ENCODE measurements at regions of chr16 and their contacts with region 1.

Region 1: GRCh38 chr16:81403616-81404373 is 40.8 kb upstream of the CMIP start:
- DNase-seq: peak; percentile 83
- H3K4me3 Mint-ChIP-seq: no peak overlapping the region
- H3K27ac Mint-ChIP-seq: no peak overlapping the region
- H3K4me1 Mint-ChIP-seq: peaks cover 4% of the 10 kb centered on the region
- H3K27me3 Mint-ChIP-seq: peaks cover 4% of the 10 kb centered on the region

Region 2: DNA sequence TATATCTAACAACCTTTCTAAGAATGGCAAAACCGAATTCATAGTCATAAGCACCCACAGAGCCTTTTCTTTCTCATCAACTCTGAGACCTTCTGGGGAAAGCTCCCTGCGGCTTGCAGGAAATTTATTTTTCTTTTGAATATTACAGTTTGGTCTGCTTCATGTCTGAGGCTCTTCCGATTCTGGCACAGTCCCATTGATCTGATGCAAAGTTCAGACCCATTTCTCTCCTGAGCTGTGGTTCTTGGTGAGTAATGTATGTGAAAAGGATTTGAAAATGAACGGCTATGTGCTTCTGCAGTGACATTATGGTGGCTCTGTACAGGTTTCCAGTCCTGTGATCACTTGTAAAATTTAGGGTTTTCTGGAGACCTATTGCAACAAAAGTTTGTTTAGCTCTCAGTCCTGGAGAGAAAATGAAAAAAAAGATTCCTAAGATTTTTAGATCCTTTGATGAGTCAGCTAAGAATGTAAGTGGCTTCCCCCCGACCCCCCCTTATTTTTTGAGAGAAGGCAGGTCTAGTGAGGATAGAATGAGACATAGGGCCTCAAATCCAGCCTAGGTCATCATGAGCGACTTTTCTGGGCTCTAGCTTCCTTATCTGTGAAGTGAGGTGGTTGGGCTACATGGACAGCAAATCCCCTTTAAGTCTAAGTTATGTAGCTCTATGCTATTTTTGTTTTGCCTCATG is 84.4 kb before region 1 on chr16:
- CTCF ChIA-PET with region 1: no interaction called
- POLR2A ChIA-PET with region 1: no interaction called
- DNase-seq: no peak
- H3K4me3 Mint-ChIP-seq: no peak overlapping the region
- H3K27ac Mint-ChIP-seq: no peak overlapping the region
- H3K4me1 Mint-ChIP-seq: peaks cover 25% of the 10 kb centered on the region
- H3K27me3 Mint-ChIP-seq: no peaks in the 10 kb centered on the region

Region 3: DNA sequence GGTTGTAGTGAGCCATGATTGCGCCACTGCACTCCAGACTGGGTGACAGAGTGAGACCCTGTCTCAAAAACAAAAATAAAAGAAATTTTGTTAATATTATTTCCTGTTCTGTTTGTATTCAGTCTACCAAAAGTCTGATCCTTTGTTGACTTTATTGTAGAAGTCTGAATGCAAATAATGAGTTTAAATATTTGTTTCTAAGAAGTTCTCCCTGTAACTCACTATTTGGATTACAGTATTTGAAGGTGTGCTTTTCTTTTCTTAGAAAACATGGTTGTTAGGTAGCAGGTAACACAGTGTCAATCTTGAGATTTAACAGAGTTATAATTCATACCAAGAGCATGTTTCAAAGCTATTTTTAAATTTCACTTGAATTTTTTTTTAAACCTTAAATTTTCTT is 54.2 kb before region 1 on chr16:
- CTCF ChIA-PET with region 1: no interaction called
- POLR2A ChIA-PET with region 1: no interaction called
- DNase-seq: no peak
- H3K4me3 Mint-ChIP-seq: no peak overlapping the region
- H3K27ac Mint-ChIP-seq: no peak overlapping the region
- H3K4me1 Mint-ChIP-seq: peaks cover 6% of the 10 kb centered on the region
- H3K27me3 Mint-ChIP-seq: no peaks in the 10 kb centered on the region

Region 4: DNA sequence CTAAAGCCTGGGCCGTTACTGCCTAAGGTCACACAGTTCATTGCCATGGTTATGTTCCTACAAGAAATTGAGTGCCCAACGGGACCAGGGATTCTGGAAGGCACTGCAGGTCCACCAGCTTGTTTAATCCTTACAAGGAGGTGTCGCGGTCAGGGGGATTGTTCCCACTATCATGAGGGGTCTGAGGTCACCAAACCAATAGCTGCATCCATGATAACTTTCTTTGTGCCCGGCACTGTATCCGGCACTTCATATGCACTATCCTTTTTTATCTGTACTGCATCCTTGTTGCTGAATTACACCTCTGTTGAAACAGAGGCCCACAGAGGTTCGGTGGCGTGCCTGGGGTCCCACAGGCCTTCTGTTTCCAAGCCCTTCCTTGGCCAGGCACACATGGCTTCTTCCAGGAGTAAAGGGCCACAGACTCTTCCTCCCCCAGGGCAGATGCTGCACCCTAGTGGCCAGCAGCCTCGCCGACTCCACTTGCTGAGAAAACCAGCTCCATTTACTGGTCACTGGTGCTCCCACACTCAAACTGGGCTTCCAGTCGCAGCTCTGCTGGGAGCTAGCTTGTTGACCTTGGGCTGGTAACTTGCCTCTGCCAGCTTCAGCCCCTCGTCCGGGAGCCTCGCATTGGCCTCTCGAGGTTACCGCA is 293.3 kb after region 1 on chr16:
- CTCF ChIA-PET with region 1: interaction called, 19 read pairs
- POLR2A ChIA-PET with region 1: no interaction called
- DNase-seq: peak; percentile 61
- H3K4me3 Mint-ChIP-seq: no peak overlapping the region
- H3K27ac Mint-ChIP-seq: no peak overlapping the region
- H3K4me1 Mint-ChIP-seq: no peaks in the 10 kb centered on the region
- H3K27me3 Mint-ChIP-seq: no peaks in the 10 kb centered on the region

Region 5: GRCh38 chr16:81723098-81723723 is 319.4 kb after region 1 on chr16:
- CTCF ChIA-PET with region 1: interaction called, 10 read pairs
- POLR2A ChIA-PET with region 1: no interaction called
- DNase-seq: peak; percentile 35
- H3K4me3 Mint-ChIP-seq: no peak overlapping the region
- H3K27ac Mint-ChIP-seq: peak overlapping the region; percentile 63
- H3K4me1 Mint-ChIP-seq: peaks cover 25% of the 10 kb centered on the region
- H3K27me3 Mint-ChIP-seq: no peaks in the 10 kb centered on the region